Posterior cingulate gyrus (tissue), 11 donors: ENCODE measurements at regions of chr6 and their contacts with region 1.

Region 1: DNA sequence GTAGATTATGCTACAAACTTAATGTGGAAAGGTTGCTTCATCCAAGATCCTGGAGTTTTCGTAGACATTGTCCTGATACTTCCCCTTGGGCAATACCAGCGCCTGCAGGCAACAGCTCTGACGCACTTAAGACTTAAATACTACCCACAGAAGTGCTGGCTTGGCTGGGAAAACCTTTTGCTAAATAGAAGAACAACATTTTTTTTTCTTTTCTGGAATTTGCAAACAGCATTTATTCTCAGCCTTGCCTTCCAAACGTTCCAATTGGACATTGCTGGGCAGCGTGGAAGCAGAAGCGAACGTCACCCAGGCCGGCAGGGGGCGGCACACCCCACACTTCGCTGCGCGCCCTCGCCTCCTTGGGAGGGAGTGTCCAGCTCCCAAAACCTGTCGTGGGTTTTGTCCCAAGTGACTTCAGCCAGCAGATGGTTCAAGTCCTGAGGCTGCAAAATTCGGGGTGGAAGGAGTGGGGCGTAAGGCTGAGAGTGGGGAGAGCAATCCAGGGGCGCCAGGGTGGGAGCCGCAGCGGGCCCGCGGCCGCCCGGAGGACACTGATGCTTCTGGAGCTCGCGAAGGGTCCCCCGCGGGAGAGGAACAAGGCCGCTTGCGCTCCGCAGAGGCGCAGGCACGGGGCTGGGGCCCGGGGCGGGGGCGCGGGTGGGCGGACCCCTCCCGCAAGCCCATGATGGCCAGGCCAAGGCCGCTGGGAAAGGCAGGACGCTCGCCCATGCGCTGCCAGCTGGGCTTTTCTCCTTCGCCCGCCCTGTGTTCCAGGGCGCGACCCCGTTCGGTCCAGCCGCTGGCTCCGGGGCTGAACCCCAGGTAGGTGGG is 60.8 kb upstream of the MAP3K4 start:
- DNase-seq: peak; percentile 75 to 98 (median 84)

Region 2: GRCh38 chr6:160831739-160832138 is 99.0 kb before region 1 on chr6:
- intact Hi-C with region 1: no loop called
- DNase-seq: no peak

Region 3: DNA sequence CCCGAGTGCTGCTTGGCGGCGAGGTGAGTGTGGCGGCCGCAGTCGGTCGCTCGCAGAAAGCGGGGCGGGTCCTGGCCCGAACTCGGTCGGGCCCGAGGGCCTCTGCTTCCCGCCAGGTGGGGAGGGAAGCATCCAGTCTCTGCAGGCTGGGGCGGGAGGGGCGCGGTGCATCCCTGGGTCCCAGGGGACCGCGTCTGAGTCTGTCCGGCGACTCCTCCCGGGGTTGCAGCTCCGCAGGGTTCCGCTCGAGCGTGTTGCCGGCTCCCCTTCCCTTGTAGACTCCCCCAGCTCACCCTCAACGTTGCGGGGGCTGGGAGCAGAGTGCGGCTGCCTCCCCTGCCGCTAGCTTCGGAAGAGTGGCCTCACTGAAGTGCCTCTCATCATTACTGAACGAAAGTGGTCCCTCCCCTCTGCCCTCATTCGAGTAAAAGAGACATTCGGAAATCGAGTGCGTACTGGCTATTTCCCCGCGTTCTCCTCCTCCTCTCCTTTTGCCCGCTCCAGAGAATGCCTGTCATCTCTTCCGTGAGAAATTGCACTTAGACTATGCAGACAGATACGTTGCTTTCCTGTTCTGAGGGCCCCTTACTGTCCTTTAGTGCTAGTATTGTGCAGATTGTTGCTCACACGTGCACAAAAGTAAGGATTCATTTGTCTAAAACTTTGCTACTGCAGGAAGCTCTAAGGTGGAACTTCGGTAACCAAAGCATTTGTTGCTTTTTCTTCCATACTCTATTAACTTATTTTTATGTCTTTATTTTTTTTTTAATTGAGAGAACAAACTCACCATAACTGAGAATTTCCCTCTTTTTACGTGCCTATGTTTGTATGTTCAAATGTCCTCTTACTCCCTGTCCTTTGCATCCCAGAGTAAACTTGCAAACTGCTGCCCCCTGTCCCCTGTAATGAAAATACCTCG is 61.6 kb after region 1 on chr6:
- intact Hi-C with region 1: loop called (anchors 1 kb)
- DNase-seq: peak; percentile 38 to 92 (median 50)

Region 4: DNA sequence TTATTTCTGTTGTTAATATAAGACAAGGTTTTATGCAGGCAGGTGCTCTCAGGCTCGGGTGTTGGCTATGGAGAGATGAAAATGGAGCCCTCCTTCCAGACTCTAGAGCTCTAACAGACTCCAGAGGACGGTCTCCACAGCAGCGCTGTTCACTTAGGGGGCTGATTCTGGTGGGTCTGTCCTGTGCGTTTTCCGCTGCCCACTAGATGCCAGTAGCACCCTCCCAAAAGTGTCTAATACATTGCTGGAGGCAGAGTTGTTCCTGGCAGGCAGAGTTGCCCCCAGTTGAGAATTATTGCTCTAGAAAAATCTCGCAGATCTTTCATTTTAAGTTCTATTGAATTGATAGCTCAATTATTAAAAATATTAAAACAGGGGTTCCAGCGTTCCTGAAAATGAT is 170.8 kb after region 1 on chr6:
- intact Hi-C with region 1: loop called (anchors 5 kb)
- DNase-seq: peak in 6 of 10 donors; percentile 22 to 87 (median 40)

Region 5: GRCh38 chr6:161257793-161258457 is 327.2 kb after region 1 on chr6:
- intact Hi-C with region 1: no loop called
- DNase-seq: no peak